Activated CD4-positive, alpha-beta memory T cell treated with anti-CD3 and anti-CD28 coated beads for 36 hours (primary cell): ENCODE measurements at regions of chr16 and their contacts with region 1.

Region 1: GRCh38 chr16:27401768-27402568 is at the start of gene IL21R:
- DNase-seq: peak; percentile 93
- H3K4me3 Mint-ChIP-seq: peak within 1 kb of the TSS; percentile 100
- H3K27ac Mint-ChIP-seq: peak within 1 kb of the TSS; percentile 96
- H3K4me1 Mint-ChIP-seq: peaks cover 43% of the 10 kb centered on the region
- H3K27me3 Mint-ChIP-seq: no peaks in the 10 kb centered on the region
- total RNA-seq, gene IL21R: 55.0 to 55.9 TPM

Region 2: GRCh38 chr16:27313422-27314160 is 88.4 kb before region 1 on chr16 and contains the start of gene IL4R:
- CTCF ChIA-PET with region 1: no interaction called
- POLR2A ChIA-PET with region 1: interaction called, 35 read pairs
- intact Hi-C with region 1: loop called (anchors 2 kb)
- DNase-seq: peak; percentile 86
- H3K4me3 Mint-ChIP-seq: peak within 1 kb of the TSS; percentile 94
- H3K27ac Mint-ChIP-seq: peak within 1 kb of the TSS; percentile 96
- H3K4me1 Mint-ChIP-seq: peaks cover 41% of the 10 kb centered on the region
- H3K27me3 Mint-ChIP-seq: no peaks in the 10 kb centered on the region
- total RNA-seq, gene IL4R: 146 to 153 TPM

Region 3: DNA sequence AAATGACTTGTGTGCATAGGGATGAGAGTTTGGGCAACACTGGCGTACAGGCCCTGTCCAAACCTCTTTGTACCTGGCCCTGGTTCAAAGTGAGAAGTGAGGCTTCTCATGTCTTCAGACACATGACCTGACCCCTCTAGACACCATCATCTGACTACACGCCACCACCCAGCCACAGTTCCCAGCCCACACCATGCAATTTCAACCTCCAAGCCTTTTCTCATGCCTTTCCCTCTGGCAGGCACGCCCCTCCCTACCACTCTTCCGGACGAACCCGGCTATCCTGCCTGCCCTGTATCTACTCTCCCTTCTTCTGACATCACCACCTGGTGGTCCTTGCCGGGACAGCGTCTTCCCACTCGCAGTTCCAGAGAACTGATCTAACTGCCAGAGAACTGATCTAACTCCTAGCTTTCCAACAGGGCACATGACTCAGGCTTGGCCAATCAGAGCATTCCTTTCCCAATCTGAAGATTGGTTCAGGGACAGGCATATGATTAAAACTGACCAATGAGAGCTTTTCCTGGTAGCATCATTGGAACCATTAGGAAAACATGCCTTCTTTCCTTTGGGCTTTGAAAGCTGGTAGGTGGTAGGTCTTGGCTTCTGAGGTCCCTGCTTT is 27.1 kb before region 1 on chr16:
- CTCF ChIA-PET with region 1: interaction called, 75 read pairs
- POLR2A ChIA-PET with region 1: interaction called, 20 read pairs
- intact Hi-C with region 1: loop called (anchors 2 kb)
- DNase-seq: peak; percentile 83
- H3K4me3 Mint-ChIP-seq: no peak overlapping the region
- H3K27ac Mint-ChIP-seq: no peak overlapping the region
- H3K4me1 Mint-ChIP-seq: peaks cover 36% of the 10 kb centered on the region
- H3K27me3 Mint-ChIP-seq: no peaks in the 10 kb centered on the region

Region 4: DNA sequence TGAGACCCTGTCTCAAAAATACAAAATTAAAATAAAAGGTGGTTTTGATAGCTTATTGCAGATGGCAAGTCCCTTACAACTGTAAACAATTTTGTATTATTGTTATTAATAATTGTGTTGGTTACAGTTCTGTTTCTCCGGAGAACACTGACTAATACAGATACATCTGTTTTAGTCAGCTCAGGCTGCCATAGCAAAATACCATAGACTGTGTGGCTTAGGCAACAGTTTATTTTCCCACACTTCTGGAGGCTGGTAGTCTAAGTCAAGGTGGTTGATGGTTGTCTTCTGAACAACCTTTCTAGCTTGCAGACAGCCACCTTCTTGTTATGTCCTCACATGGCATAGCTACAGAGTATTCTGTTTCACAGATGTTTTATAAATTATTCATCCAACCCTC is 14.2 kb before region 1 on chr16:
- CTCF ChIA-PET with region 1: interaction called, 6 read pairs
- POLR2A ChIA-PET with region 1: interaction called, 34 read pairs
- intact Hi-C with region 1: loop called (anchors 2 kb)
- DNase-seq: no peak
- H3K4me3 Mint-ChIP-seq: no peak overlapping the region
- H3K27ac Mint-ChIP-seq: peak overlapping the region; percentile 39
- H3K4me1 Mint-ChIP-seq: peaks cover 18% of the 10 kb centered on the region
- H3K27me3 Mint-ChIP-seq: no peaks in the 10 kb centered on the region

Region 5: DNA sequence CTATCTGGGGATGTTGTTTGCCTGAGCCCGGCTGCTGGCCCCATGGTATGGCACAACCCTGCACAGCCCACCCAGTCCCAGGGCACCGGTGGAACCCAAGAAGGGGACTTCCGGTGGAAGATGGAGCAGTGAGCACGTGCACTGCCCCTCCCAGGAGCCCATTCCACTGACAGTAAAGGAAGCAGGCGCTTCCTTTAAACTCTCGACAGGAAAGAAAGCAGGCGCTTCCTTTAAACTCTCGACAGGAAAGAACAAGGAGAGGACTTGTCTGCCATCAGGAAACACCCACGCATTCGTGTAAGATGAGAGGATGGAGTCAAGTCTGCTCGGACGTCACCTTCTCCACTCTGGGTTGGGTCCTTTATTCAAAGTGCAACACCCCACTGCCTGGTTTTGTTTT is 53.7 kb after region 1 on chr16:
- CTCF ChIA-PET with region 1: interaction called, 3 read pairs
- POLR2A ChIA-PET with region 1: interaction called, 7 read pairs
- intact Hi-C with region 1: loop called (anchors 2 kb)
- DNase-seq: peak; percentile 50
- H3K4me3 Mint-ChIP-seq: no peak overlapping the region
- H3K27ac Mint-ChIP-seq: peak overlapping the region; percentile 35
- H3K4me1 Mint-ChIP-seq: peaks cover 57% of the 10 kb centered on the region
- H3K27me3 Mint-ChIP-seq: no peaks in the 10 kb centered on the region

Region 6: DNA sequence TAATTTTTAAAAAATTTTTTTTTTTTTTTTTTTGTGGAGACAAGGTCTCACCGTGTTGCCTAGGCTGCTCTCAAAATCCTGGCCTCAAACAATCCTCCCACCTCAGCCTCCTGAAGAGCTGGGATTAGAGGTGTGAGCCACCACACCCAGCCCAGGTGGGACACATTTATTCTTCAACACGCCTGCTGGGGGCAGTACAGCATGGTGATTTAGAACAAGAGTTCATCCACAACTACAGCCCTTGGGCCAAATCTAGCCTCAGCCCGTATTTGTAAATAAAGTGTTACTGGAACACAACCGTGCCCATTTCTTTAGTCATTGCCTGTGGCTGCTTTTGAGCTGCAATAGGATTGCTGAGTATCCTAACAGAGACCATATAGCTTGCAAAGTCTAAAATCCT is 240.8 kb after region 1 on chr16:
- CTCF ChIA-PET with region 1: no interaction called
- POLR2A ChIA-PET with region 1: no interaction called
- intact Hi-C with region 1: no loop called
- DNase-seq: peak; percentile 18
- H3K4me3 Mint-ChIP-seq: no peak overlapping the region
- H3K27ac Mint-ChIP-seq: no peak overlapping the region
- H3K4me1 Mint-ChIP-seq: no peaks in the 10 kb centered on the region
- H3K27me3 Mint-ChIP-seq: no peaks in the 10 kb centered on the region